Activated CD4-positive, alpha-beta memory T cell treated with anti-CD3 and anti-CD28 coated beads, Interleukin-2, amount 10 ng/mL, durations not matched to agents 7 days and 5 days (primary cell): ENCODE measurements at regions of chr9 and their contacts with region 1.

Region 1: DNA sequence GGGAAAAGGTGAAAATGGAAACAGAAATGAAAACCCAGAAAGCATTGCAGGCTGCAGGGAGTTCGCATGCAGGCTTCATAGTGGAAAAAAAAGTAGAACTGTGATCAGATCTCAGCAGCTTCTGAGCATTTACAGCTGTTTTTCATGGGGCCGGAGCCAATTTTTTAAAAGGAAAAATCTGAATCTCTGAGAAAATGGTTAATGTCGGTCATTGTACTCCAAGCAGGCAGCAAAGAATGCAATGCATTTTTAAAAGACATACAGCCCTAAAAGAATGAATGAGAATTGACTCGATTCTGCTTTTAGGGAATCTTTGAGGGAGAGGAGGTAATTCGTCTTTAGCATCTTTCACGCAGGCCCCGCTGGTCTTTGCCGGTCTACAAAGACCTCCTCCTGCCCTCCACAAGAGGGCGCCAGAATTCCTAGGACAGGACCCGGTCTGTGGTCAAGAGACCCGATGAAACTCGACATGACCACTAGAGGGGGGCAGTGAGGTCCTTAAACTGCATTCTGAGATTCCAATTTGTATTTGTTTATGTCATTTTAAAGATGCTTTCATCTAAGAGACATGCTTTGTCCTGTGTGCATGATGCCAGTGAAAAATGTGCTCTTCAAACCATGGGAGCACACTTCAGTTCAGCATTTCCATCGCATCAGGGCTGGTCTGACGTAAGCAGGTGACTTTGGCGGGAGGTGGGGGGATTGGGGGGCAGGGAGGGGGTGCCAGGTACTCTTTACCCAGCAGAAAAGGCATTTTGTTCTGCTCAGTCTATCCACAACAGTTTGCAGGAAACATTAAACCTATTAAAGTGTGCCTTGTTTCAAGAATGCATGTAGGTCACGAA is 43.7 kb upstream of the TMEM252 start:
- DNase-seq: peak; percentile 87
- H3K4me3 Mint-ChIP-seq: no peak overlapping the region
- H3K27ac Mint-ChIP-seq: no peak overlapping the region
- H3K4me1 Mint-ChIP-seq: peaks cover 3% of the 10 kb centered on the region
- H3K27me3 Mint-ChIP-seq: peaks cover 10% of the 10 kb centered on the region

Region 2: GRCh38 chr9:68567565-68567964 is 16.8 kb before region 1 on chr9:
- CTCF ChIA-PET with region 1: interaction called, 10 read pairs
- POLR2A ChIA-PET with region 1: no interaction called
- DNase-seq: no peak
- H3K4me3 Mint-ChIP-seq: no peak overlapping the region
- H3K27ac Mint-ChIP-seq: no peak overlapping the region
- H3K4me1 Mint-ChIP-seq: no peaks in the 10 kb centered on the region
- H3K27me3 Mint-ChIP-seq: peaks cover 18% of the 10 kb centered on the region

Region 3: GRCh38 chr9:68933434-68934328 is 349.3 kb after region 1 on chr9:
- CTCF ChIA-PET with region 1: no interaction called
- POLR2A ChIA-PET with region 1: no interaction called
- DNase-seq: no peak
- H3K4me3 Mint-ChIP-seq: no peak overlapping the region
- H3K27ac Mint-ChIP-seq: no peak overlapping the region
- H3K4me1 Mint-ChIP-seq: peaks cover 30% of the 10 kb centered on the region
- H3K27me3 Mint-ChIP-seq: peaks cover 23% of the 10 kb centered on the region